ENCODE measurements at regions of chr3 and their contacts with region 1.

Region 1: DNA sequence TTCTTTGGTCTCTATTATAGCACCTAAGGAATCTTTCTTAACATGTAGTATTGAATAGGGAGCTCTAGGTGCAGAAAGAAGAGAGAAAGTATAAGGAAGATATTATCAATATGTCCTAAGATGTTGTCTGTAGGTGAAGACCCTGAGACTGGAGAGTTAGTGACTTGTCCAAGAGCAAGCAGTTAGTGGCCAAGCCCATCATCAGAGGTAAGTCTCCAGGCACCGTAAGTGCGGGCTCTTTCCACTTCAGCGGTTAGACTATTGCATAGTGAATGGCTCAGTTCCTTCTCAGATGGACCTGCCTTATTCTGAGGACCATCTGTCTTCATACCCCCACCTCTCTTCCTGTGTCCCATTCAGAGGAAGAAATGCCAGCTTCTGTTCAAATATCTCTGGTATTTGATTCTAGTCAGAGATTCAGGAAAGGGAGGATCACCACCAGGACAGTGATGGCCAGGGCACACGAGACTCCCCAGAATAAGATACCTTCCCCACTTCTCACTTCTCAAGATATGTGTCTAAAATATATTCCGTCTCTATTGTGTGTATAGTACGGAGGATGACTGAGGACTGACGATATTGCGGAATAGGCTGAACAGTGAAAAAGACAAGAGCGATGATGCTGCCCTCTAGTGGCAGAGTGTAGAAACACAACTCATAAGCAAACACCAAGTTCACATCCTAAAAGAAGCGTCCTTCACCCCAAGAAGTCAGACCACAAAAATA is 19.1 kb upstream of the ADGRG7 start:
- DNase-seq: no peak
- H3K4me3 ChIP-seq: peak overlapping the region in 1 of 4 donors; percentile 34
- H3K27ac ChIP-seq: no peak overlapping the region
- H3K4me1 ChIP-seq: peaks cover 0 to 5% (median 0%) of the 10 kb centered on the region in 3 donors
- H3K27me3 ChIP-seq: no peaks in the 10 kb centered on the region
- CTCF ChIP-seq: peak; percentile 57 to 94 (median 86)
- POLR2A ChIP-seq: no peak

Region 2: GRCh38 chr3:100463002-100463401 is 127.3 kb before region 1 on chr3:
- intact Hi-C with region 1: loop called (anchors 5 kb)
- DNase-seq: no peak
- H3K4me3 ChIP-seq: no peak overlapping the region
- H3K27ac ChIP-seq: no peak overlapping the region
- H3K4me1 ChIP-seq: peaks cover 0 to 3% (median 0%) of the 10 kb centered on the region in 3 donors
- H3K27me3 ChIP-seq: no peaks in the 10 kb centered on the region
- CTCF ChIP-seq: peak; percentile 24 to 81 (median 72)
- POLR2A ChIP-seq: no peak

Region 3: DNA sequence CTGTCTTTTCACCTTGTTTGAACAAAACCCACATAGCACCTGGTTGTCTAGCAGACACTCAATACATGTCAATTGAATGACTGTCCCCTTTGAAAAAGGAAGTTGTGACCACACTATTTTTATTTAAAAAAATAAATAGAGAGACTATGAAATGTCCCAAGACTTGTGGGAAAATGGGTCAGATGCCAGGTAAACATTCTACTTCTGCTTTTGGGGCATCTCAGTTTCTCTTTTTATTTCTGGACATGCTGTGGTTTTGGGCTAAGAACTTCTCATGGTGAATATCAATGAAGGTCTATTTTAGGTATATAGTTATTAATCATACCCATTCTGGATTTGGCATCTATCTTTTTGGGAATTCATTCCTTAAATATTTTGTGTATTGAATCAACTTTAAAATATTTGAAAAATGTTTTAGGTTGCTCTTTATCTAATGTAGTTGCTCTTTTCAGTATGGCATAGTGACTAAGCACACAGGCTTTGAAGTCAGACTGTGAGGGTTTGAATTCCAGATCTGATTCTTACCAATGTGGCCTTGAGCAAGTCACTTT is 93.5 kb before region 1 on chr3:
- intact Hi-C with region 1: no loop called
- DNase-seq: no peak
- H3K4me3 ChIP-seq: no peak overlapping the region
- H3K27ac ChIP-seq: no peak overlapping the region
- H3K4me1 ChIP-seq: peaks cover 0 to 14% (median 4%) of the 10 kb centered on the region in 3 donors
- H3K27me3 ChIP-seq: no peaks in the 10 kb centered on the region
- CTCF ChIP-seq: no peak
- POLR2A ChIP-seq: no peak

Measured in esophagus squamous epithelium (tissue), 5 donors.